ENCODE measurements at regions of chr1 and their contacts with region 1.

Region 1: GRCh38 chr1:179293340-179294327 is at the start of gene SOAT1:
- DNase-seq: peak; percentile 85 to 94 (median 90)
- ATAC-seq: peak; percentile 98
- H3K4me3 ChIP-seq: peak within 1 kb of the TSS; percentile 78
- H3K4me3 Mint-ChIP-seq: peak within 1 kb of the TSS; percentile 83 to 97 (median 92)
- H3K27ac ChIP-seq: peak within 1 kb of the TSS; percentile 96
- H3K27ac Mint-ChIP-seq: peak within 1 kb of the TSS; percentile 79 to 97 (median 93)
- H3K4me1 ChIP-seq: peaks cover 21 to 33% of the 10 kb centered on the region in 2 donors
- H3K4me1 Mint-ChIP-seq: peaks cover 28 to 51% (median 45%) of the 10 kb centered on the region in 7 donors
- H3K27me3 ChIP-seq: no peaks in the 10 kb centered on the region
- H3K27me3 Mint-ChIP-seq: no peaks in the 10 kb centered on the region
- total RNA-seq, gene SOAT1: 40.6 to 52.8 (median 45.0) TPM

Region 2: GRCh38 chr1:178725603-178726517 is 567.8 kb before region 1 on chr1:
- CTCF ChIA-PET with region 1: no interaction called
- POLR2A ChIA-PET with region 1: no interaction called
- intact Hi-C with region 1: loop called (anchors 1 to 5 kb)
- DNase-seq: peak; percentile 25 to 83 (median 73)
- ATAC-seq: peak; percentile 85
- H3K4me3 ChIP-seq: peak overlapping the region; percentile 93
- H3K4me3 Mint-ChIP-seq: peak overlapping the region; percentile 79 to 96 (median 88)
- H3K27ac ChIP-seq: peak overlapping the region; percentile 86
- H3K27ac Mint-ChIP-seq: peak overlapping the region; percentile 14 to 95 (median 88)
- H3K4me1 ChIP-seq: peaks cover 0 to 5% of the 10 kb centered on the region in 2 donors
- H3K4me1 Mint-ChIP-seq: peaks cover 11 to 39% (median 27%) of the 10 kb centered on the region in 7 donors
- H3K27me3 ChIP-seq: no peaks in the 10 kb centered on the region
- H3K27me3 Mint-ChIP-seq: peaks cover 0 to 29% (median 0%) of the 10 kb centered on the region in 5 donors

Region 3: DNA sequence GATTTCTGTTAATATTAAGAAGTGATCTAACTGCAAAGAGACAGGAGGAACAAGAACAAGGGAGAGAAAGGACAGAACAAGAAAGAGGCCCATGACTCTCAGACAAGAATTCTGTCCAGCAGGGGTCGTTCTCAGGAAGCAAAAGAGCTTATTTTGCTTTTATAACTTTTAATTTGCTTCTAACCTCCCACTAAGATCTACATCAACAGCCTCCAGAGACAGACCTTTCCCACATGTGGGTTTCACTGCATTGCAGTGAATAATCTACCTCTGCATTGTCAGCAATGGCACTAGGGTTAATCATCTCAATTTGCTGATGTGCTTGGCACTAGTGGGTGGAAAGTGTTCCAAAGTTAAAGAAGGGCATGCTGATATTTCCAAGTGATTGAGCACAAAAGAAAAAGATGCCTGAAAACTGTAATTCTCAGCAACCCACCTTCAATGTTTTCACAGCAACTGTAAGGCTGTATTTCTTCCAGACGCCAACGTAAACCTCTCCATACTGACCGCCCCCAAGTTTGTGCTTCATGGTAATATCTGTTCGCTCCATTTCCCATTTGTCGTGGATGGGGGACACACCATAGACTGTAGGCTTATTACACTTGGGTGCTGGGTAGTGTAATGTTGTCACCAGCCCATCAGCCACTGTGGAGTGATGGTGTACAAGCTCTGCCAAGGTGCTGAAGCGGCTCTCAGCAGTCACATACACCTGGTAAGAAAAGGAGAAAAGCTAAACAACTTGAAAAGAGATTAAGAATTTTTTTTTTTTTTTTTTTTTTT is 172.3 kb before region 1 on chr1:
- CTCF ChIA-PET with region 1: interaction called, 6 read pairs
- POLR2A ChIA-PET with region 1: interaction called, 4 read pairs
- intact Hi-C with region 1: loop called (anchors 1 kb)
- DNase-seq: peak in 7 of 9 donors; percentile 22 to 58 (median 46)
- ATAC-seq: peak; percentile 47
- H3K4me3 ChIP-seq: no peak overlapping the region
- H3K4me3 Mint-ChIP-seq: no peak overlapping the region
- H3K27ac ChIP-seq: no peak overlapping the region
- H3K27ac Mint-ChIP-seq: no peak overlapping the region
- H3K4me1 ChIP-seq: no peaks in the 10 kb centered on the region
- H3K4me1 Mint-ChIP-seq: peaks cover 0 to 12% (median 3%) of the 10 kb centered on the region in 7 donors
- H3K27me3 ChIP-seq: no peaks in the 10 kb centered on the region
- H3K27me3 Mint-ChIP-seq: no peaks in the 10 kb centered on the region

Region 4: DNA sequence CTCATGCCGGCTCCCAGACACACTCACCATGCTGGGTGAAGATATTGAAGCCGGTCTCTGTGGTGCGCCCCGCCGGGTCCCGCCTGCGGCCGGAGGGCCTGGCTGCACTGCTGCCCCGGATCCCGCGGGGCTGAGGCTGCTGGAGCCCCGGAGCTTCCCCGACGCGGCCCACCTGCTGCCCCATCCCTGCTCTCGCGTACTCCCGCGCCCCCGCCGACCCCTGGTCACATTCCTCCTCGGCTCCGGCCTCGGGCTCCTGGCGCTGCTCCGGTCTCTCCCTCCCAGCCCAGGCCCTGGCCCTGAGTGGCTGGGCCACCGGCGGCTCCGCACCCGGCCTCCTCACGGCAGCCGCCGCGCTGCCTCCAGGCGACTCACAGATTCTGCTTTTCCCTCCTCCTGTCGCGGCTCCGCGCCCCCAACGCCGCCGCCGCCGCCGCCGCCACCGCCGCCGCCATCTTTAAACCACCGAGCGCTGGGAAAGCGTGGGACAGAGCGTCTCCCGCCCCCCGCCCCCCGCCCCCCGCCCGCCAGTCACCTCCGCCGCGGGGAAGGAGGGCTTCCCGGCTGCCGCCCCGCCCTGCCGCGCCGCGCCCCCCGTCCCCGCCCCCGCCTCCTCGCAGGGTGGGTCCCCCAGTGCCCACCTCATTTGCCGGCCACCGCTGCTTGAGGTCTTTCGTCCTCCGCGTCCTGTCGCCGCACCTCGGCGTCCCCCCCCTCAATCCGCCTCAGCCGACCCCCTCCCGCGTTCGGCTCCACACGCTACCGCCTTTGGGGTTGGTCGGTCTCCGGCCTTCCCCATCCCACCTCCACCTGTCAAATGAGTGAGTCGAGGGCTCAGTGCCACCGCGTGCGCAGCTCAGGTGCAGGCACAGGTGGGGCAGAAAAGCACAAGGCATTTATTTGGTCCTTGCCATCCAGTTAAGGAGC is 64.2 kb before region 1 on chr1 and contains the start of gene ABL2:
- CTCF ChIA-PET with region 1: no interaction called
- POLR2A ChIA-PET with region 1: no interaction called
- intact Hi-C with region 1: loop called in 1 of 2 experiments (anchors 1 kb)
- DNase-seq: peak; percentile 20 to 73 (median 41)
- ATAC-seq: peak; percentile 77
- H3K4me3 ChIP-seq: peak within 1 kb of the TSS; percentile 66
- H3K4me3 Mint-ChIP-seq: peak within 1 kb of the TSS; percentile 85 to 97 (median 92)
- H3K27ac ChIP-seq: peak within 1 kb of the TSS; percentile 81
- H3K27ac Mint-ChIP-seq: peak within 1 kb of the TSS; percentile 81 to 95 (median 89)
- H3K4me1 ChIP-seq: peaks cover 0 to 14% of the 10 kb centered on the region in 2 donors
- H3K4me1 Mint-ChIP-seq: peaks cover 20 to 43% (median 39%) of the 10 kb centered on the region in 7 donors
- H3K27me3 ChIP-seq: no peaks in the 10 kb centered on the region
- H3K27me3 Mint-ChIP-seq: peaks cover 0 to 5% (median 0%) of the 10 kb centered on the region in 5 donors
- total RNA-seq, gene ABL2: 10.3 to 20.1 (median 18.6) TPM

Region 5: GRCh38 chr1:179310721-179311120 is 17.1 kb after region 1 on chr1:
- CTCF ChIA-PET with region 1: no interaction called
- POLR2A ChIA-PET with region 1: interaction called, 6 read pairs
- intact Hi-C with region 1: loop called in 1 of 2 experiments (anchors 2 kb)
- DNase-seq: no peak
- ATAC-seq: peak; percentile 55
- H3K4me3 ChIP-seq: no peak overlapping the region
- H3K4me3 Mint-ChIP-seq: no peak overlapping the region
- H3K27ac ChIP-seq: no peak overlapping the region
- H3K27ac Mint-ChIP-seq: peak overlapping the region in 3 of 9 donors; percentile 15 to 48 (median 32)
- H3K4me1 ChIP-seq: peaks cover 0 to 3% of the 10 kb centered on the region in 2 donors
- H3K4me1 Mint-ChIP-seq: peaks cover 13 to 64% (median 52%) of the 10 kb centered on the region in 7 donors
- H3K27me3 ChIP-seq: no peaks in the 10 kb centered on the region
- H3K27me3 Mint-ChIP-seq: no peaks in the 10 kb centered on the region

Region 6: GRCh38 chr1:179831852-179832699 is 538.4 kb after region 1 on chr1:
- CTCF ChIA-PET with region 1: no interaction called
- POLR2A ChIA-PET with region 1: no interaction called
- intact Hi-C with region 1: loop called in 1 of 2 experiments (anchors 5 kb)
- DNase-seq: peak in 7 of 9 donors; percentile 63 to 80 (median 76)
- ATAC-seq: peak; percentile 84
- H3K4me3 ChIP-seq: peak overlapping the region; percentile 56
- H3K4me3 Mint-ChIP-seq: peak overlapping the region; percentile 63 to 81 (median 72)
- H3K27ac ChIP-seq: peak overlapping the region; percentile 59
- H3K27ac Mint-ChIP-seq: peak overlapping the region; percentile 52 to 95 (median 91)
- H3K4me1 ChIP-seq: peaks cover 16 to 37% of the 10 kb centered on the region in 2 donors
- H3K4me1 Mint-ChIP-seq: peaks cover 23 to 47% (median 38%) of the 10 kb centered on the region in 7 donors
- H3K27me3 ChIP-seq: no peaks in the 10 kb centered on the region
- H3K27me3 Mint-ChIP-seq: no peaks in the 10 kb centered on the region